ENCODE measurements at regions of chr12 and their contacts with region 1.

Region 1: DNA sequence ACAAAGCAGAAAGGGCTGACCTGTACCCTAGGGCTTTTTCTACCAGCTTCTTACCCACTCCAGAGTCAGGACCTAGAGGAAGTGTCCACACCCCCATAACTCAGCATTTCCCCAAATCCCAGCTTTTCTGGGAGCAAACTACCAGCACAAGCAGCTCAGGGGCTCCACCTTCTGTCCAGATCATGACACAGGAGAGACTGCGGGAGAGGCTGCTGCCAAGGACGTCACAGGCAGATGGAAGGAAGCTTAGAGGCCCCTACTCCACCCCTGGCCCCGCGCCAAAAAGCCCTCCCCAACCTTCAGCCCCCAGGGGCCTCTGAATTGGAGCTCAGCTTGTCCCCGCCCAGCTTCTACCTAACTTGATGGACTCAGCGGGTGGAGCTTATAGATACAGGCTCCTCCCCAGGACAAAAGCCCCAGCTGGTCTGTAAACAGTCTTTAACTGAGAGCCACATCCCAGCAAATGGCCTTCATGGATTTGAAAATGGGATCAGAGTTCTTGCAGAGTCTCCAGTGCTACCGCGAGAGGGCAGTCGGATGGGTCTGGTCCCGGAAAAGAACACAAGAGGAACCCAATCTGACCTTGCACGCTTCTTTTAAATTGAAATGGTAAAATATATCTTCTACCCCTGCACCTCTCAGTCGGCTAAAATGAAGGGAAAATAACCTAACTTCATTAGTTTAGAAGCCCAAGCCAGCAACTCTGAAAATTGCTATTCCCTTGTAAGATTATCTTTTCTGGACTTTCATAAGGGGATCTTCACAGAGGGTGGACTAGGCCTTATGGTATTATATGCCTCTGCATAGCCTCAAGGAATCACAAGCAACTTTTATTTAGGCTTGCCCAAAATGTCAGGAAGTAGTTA is 6.8 kb upstream of the BAZ2A start:
- DNase-seq: peak; percentile 99
- H3K4me3 ChIP-seq: peak overlapping the region in 2 of 3 experiments; percentile 21 to 76
- H3K27ac ChIP-seq: peak overlapping the region; percentile 48
- H3K4me1 ChIP-seq: peaks cover 34% of the 10 kb centered on the region
- H3K27me3 ChIP-seq: no peaks in the 10 kb centered on the region
- CTCF ChIP-seq: peak; percentile 65 to 77
- POLR2A ChIP-seq: peak; percentile 78

Region 2: GRCh38 chr12:56581418-56582145 is 55.3 kb before region 1 on chr12:
- CTCF ChIA-PET with region 1: interaction called, 11 read pairs
- POLR2A ChIA-PET with region 1: no interaction called
- dilution Hi-C with region 1: no loop called
- intact Hi-C with region 1: no loop called
- DNase-seq: peak; percentile 82
- H3K4me3 ChIP-seq: no peak overlapping the region
- H3K27ac ChIP-seq: peak overlapping the region; percentile 63
- H3K4me1 ChIP-seq: peaks cover 20% of the 10 kb centered on the region
- H3K27me3 ChIP-seq: no peaks in the 10 kb centered on the region
- CTCF ChIP-seq: no peak
- POLR2A ChIP-seq: peak; percentile 18

Region 3: DNA sequence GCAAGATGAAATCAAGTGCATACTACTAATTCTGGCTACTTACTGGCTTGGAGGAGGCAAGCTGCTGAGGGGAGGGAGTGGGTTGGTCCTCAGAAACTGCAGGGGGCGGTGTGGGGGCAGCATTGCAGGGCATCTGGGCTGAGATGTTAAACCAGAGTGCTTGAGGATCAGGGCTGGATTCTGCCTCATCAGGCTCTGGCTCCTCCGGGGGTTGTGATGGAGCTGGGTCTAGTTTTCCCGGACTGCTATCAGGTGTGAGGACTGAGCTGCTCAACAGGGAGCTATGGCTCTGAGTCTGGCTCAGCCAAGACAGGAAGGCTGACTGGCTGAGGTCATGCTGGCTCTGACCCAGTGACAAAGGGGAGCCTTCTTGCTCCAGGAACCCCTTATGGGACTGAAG is 35.4 kb before region 1 on chr12:
- CTCF ChIA-PET with region 1: interaction called, 90 read pairs
- POLR2A ChIA-PET with region 1: interaction called, 10 read pairs
- dilution Hi-C with region 1: no loop called
- intact Hi-C with region 1: loop called (anchors 1 kb)
- DNase-seq: peak; percentile 36
- H3K4me3 ChIP-seq: no peak overlapping the region
- H3K27ac ChIP-seq: no peak overlapping the region
- H3K4me1 ChIP-seq: no peaks in the 10 kb centered on the region
- H3K27me3 ChIP-seq: no peaks in the 10 kb centered on the region
- CTCF ChIP-seq: peak in 1 of 2 donors; percentile 36
- POLR2A ChIP-seq: no peak

Region 4: DNA sequence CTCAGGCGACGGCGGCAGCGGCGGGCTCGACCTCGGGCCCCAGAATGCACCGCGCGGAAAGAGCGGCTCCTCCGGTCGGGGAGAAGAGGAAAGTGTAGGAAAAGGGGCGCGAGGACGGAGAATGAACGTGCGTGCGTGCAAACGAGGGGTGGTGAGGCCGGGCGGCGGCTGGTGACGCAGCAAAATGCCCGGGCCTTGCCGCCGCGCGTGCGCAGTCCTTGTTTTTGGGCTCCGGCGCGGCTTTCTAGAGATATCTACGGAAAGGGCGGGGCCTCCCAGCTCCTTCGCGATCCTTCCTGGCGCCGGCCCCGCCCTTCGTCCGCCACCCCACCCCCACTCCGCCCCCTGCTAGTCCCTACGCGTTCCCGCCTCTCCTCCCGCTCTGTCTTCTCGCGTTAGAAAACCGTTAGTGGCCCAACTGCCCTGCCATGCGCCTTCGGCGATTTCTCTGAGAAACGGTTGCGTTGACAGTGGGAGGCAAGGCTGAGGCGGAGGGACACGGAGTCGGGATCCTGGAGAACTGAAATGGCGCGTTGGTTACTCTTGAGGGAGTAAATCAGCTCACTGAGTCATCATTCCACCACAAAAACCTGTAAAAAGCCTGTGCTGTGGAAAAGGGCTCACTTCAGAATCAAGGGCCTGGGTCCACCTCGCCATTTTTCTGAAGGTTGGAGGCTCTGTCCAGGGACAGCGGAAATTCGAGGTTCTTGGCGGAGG is 51.4 kb after region 1 on chr12 and contains the start of gene PTGES3:
- CTCF ChIA-PET with region 1: interaction called, 12 read pairs
- POLR2A ChIA-PET with region 1: interaction called, 5 read pairs
- dilution Hi-C with region 1: no loop called
- intact Hi-C with region 1: loop called (anchors 2 kb)
- DNase-seq: peak; percentile 99
- H3K4me3 ChIP-seq: peak within 1 kb of the TSS; percentile 61 to 91 (median 84)
- H3K27ac ChIP-seq: peak within 1 kb of the TSS; percentile 90
- H3K4me1 ChIP-seq: peaks cover 27% of the 10 kb centered on the region
- H3K27me3 ChIP-seq: no peaks in the 10 kb centered on the region
- CTCF ChIP-seq: peak in 1 of 2 donors; percentile 3
- POLR2A ChIP-seq: peak; percentile 88
- total RNA-seq, gene PTGES3: 262 and 278 TPM in 2 replicates

Region 5: DNA sequence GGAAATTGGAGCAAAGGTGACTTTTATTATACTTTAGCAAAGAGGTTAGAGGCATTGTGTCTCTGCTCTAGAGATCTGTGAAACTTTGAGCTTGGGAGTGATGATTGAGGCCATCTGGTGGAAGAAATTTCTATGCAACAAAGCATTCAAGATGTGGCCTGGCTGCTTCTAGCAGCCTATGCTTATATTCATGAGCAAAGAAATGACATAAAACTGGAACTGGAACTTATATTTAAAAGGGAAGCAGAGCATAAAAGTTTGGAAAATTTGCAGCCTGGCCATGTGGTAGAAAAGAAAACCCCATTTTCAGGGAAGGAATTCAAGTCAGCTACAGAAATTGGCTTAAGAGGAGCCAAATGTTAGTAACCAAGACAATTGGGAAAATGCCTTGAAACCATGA is 226.9 kb after region 1 on chr12:
- CTCF ChIA-PET with region 1: no interaction called
- POLR2A ChIA-PET with region 1: no interaction called
- dilution Hi-C with region 1: no loop called
- intact Hi-C with region 1: no loop called
- DNase-seq: no peak
- H3K4me3 ChIP-seq: no peak overlapping the region
- H3K27ac ChIP-seq: no peak overlapping the region
- H3K4me1 ChIP-seq: no peaks in the 10 kb centered on the region
- H3K27me3 ChIP-seq: peaks cover under 1 to 3% of the 10 kb centered on the region in 2 experiments
- CTCF ChIP-seq: no peak
- POLR2A ChIP-seq: no peak

Region 6: GRCh38 chr12:56957229-56957939 is 320.5 kb after region 1 on chr12 and contains the start of gene RDH16:
- CTCF ChIA-PET with region 1: no interaction called
- POLR2A ChIA-PET with region 1: no interaction called
- dilution Hi-C with region 1: no loop called
- intact Hi-C with region 1: no loop called
- DNase-seq: no peak
- H3K4me3 ChIP-seq: no peak within 1 kb of the TSS
- H3K27ac ChIP-seq: no peak within 1 kb of the TSS
- H3K4me1 ChIP-seq: no peaks in the 10 kb centered on the region
- H3K27me3 ChIP-seq: peaks cover 6 to 9% of the 10 kb centered on the region in 2 experiments
- CTCF ChIP-seq: no peak
- POLR2A ChIP-seq: no peak
- total RNA-seq, gene RDH16: 0.09 and 0.29 TPM in 2 replicates

Region 7: GRCh38 chr12:56987551-56988053 is 350.7 kb after region 1 on chr12:
- CTCF ChIA-PET with region 1: no interaction called
- POLR2A ChIA-PET with region 1: no interaction called
- dilution Hi-C with region 1: no loop called
- intact Hi-C with region 1: loop called (anchors 5 kb)
- DNase-seq: peak; percentile 55
- H3K4me3 ChIP-seq: no peak overlapping the region
- H3K27ac ChIP-seq: peak overlapping the region; percentile 3
- H3K4me1 ChIP-seq: peaks cover 30% of the 10 kb centered on the region
- H3K27me3 ChIP-seq: peaks cover 2 to 3% of the 10 kb centered on the region in 2 experiments
- CTCF ChIP-seq: peak; percentile 93
- POLR2A ChIP-seq: no peak